ENCODE measurements at regions of chr19 and their contacts with region 1.

Region 1: GRCh38 chr19:17069218-17069617 is 6.0 kb downstream of the HAUS8 start:
- DNase-seq: no peak
- ATAC-seq: no peak
- H3K4me3 Mint-ChIP-seq: no peak overlapping the region
- H3K27ac Mint-ChIP-seq: no peak overlapping the region
- H3K4me1 Mint-ChIP-seq: peaks cover 57% of the 10 kb centered on the region
- H3K27me3 Mint-ChIP-seq: no peaks in the 10 kb centered on the region
- CTCF ChIP-seq: no peak

Region 2: GRCh38 chr19:17052439-17053210 is 16.6 kb before region 1 on chr19:
- CTCF ChIA-PET with region 1: no interaction called
- POLR2A ChIA-PET with region 1: no interaction called
- intact Hi-C with region 1: no loop called
- DNase-seq: no peak
- ATAC-seq: peak; percentile 28
- H3K4me3 Mint-ChIP-seq: no peak overlapping the region
- H3K27ac Mint-ChIP-seq: no peak overlapping the region
- H3K4me1 Mint-ChIP-seq: no peaks in the 10 kb centered on the region
- H3K27me3 Mint-ChIP-seq: no peaks in the 10 kb centered on the region
- CTCF ChIP-seq: no peak

Region 3: GRCh38 chr19:17090583-17090982 is 21.4 kb after region 1 on chr19:
- CTCF ChIA-PET with region 1: no interaction called
- POLR2A ChIA-PET with region 1: no interaction called
- intact Hi-C with region 1: no loop called
- DNase-seq: no peak
- ATAC-seq: peak; percentile 70
- H3K4me3 Mint-ChIP-seq: peak overlapping the region; percentile 29
- H3K27ac Mint-ChIP-seq: peak overlapping the region; percentile 85
- H3K4me1 Mint-ChIP-seq: peaks cover 59% of the 10 kb centered on the region
- H3K27me3 Mint-ChIP-seq: no peaks in the 10 kb centered on the region
- CTCF ChIP-seq: no peak

Region 4: GRCh38 chr19:17135001-17135853 is 66.0 kb after region 1 on chr19:
- CTCF ChIA-PET with region 1: no interaction called
- POLR2A ChIA-PET with region 1: no interaction called
- intact Hi-C with region 1: loop called (anchors 2 kb)
- DNase-seq: peak; percentile 58
- ATAC-seq: peak; percentile 86
- H3K4me3 Mint-ChIP-seq: peak overlapping the region; percentile 77
- H3K27ac Mint-ChIP-seq: peak overlapping the region; percentile 86
- H3K4me1 Mint-ChIP-seq: peaks cover 67% of the 10 kb centered on the region
- H3K27me3 Mint-ChIP-seq: no peaks in the 10 kb centered on the region
- CTCF ChIP-seq: no peak

Region 5: GRCh38 chr19:17205237-17206140 is 136.3 kb after region 1 on chr19:
- CTCF ChIA-PET with region 1: interaction called, 4 read pairs
- POLR2A ChIA-PET with region 1: no interaction called
- intact Hi-C with region 1: loop called (anchors 1 kb)
- DNase-seq: peak; percentile 48
- ATAC-seq: peak; percentile 72
- H3K4me3 Mint-ChIP-seq: no peak overlapping the region
- H3K27ac Mint-ChIP-seq: no peak overlapping the region
- H3K4me1 Mint-ChIP-seq: peaks cover 15% of the 10 kb centered on the region
- H3K27me3 Mint-ChIP-seq: no peaks in the 10 kb centered on the region
- CTCF ChIP-seq: no peak

Region 6: DNA sequence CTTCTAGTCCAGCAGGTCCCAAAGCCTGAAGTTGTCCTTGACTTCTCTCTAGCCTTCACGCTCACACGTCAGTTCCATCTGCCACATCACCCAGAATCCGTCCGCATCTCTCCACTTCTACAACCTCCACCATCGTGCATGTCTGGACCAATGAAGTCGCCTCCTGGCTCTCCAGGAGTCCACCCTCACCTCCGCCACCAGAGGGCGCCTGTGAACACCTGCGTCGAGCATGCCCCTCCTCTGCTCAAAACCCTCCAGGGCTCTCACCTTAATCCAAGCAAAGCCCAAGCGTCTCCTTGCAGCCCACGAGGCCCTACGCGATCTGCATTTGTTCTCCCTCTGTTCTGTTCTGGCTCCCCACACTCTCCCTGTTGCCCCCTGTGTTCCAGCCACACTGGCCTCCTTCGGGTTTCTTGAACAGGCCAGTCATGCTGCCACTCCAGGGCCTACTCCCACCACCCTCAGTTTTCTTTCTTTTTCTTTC is 191.7 kb after region 1 on chr19:
- CTCF ChIA-PET with region 1: no interaction called
- POLR2A ChIA-PET with region 1: interaction called, 3 read pairs
- intact Hi-C with region 1: loop called (anchors 1 kb)
- DNase-seq: peak; percentile 83
- ATAC-seq: peak; percentile 100
- H3K4me3 Mint-ChIP-seq: no peak overlapping the region
- H3K27ac Mint-ChIP-seq: no peak overlapping the region
- H3K4me1 Mint-ChIP-seq: peaks cover 11% of the 10 kb centered on the region
- H3K27me3 Mint-ChIP-seq: no peaks in the 10 kb centered on the region
- CTCF ChIP-seq: peak; percentile 74

Region 7: DNA sequence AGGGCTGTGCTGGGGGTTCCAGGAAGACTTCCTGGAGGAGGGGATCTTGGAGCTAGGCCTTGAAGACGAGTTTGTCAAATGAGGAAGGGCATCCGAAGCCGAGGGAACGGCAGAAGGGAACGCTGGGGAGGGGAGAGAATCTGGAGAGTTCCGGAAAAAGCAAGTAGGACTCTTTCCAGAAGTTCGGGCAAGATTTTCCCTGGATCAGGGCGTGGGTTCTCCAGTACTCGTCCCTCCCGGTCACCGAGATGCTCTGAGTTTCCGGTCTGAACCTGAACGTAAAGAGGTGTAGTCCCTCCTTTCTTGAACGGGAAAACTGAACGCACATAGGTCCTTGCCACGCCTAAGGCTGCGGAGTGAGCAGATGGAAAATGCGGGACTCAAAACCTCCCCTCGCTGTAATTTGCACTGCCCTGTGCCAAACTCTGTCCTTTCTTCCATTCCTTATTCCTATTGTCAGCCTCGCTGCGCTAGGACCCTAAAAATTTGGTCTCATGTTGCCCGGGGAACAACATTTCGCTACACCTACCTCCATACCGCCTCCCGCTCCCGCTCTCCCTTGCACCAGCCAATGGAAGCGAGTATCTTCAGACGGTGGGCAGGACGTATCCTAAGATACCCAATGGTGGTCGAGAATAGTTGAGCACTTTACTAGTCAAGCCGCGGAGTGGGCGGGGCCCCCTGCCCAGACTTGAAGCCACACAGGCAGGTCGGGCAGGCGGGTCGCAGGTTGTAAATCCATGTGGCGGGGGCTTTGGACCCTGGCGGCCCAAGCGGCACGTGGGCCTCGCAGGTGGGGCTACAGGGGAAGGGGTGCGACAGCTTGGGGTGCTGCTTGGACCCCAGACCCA is 267.9 kb after region 1 on chr19 and contains the start of gene GTPBP3:
- CTCF ChIA-PET with region 1: no interaction called
- POLR2A ChIA-PET with region 1: no interaction called
- intact Hi-C with region 1: no loop called
- DNase-seq: peak; percentile 87
- ATAC-seq: peak; percentile 88
- H3K4me3 Mint-ChIP-seq: peak within 1 kb of the TSS; percentile 90
- H3K27ac Mint-ChIP-seq: peak within 1 kb of the TSS; percentile 89
- H3K4me1 Mint-ChIP-seq: peaks cover 36% of the 10 kb centered on the region
- H3K27me3 Mint-ChIP-seq: no peaks in the 10 kb centered on the region
- CTCF ChIP-seq: no peak
- total RNA-seq, gene GTPBP3: 32.4 and 40.2 TPM in 2 replicates

Measured in activated B cell treated with CpG ODN at 0.5 μM for 24 hours (primary cell).